ENCODE measurements at regions of chr12 and their contacts with region 1.

Region 1: GRCh38 chr12:13347241-13348043 is 150.9 kb downstream of the EMP1 start:
- DNase-seq: peak; percentile 76
- H3K4me3 Mint-ChIP-seq: no peak overlapping the region
- H3K27ac Mint-ChIP-seq: peak overlapping the region; percentile 18
- H3K4me1 Mint-ChIP-seq: peaks cover 11% of the 10 kb centered on the region
- H3K27me3 Mint-ChIP-seq: peaks cover 33% of the 10 kb centered on the region

Region 2: DNA sequence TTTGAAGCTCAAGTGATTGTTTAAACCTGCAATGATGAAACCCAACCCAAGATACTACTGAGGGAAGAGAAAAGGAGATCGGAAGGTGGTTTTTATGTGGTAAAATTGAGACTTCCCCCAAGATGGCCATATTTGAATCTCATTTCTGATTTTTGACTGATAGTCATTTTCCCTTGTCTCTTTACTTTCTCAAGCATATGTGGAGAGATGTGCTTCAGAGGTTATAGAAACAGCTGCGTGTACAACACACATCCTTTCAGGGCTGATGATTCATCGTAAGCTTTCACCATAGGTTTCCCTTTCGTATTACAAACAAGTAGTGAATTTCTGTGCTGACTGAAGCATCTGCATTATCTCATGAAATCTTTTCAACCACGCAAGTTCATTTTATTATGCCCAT is 125.2 kb after region 1 on chr12:
- CTCF ChIA-PET with region 1: no interaction called
- POLR2A ChIA-PET with region 1: no interaction called
- intact Hi-C with region 1: loop called (anchors 5 kb)
- DNase-seq: no peak
- H3K4me3 Mint-ChIP-seq: no peak overlapping the region
- H3K27ac Mint-ChIP-seq: no peak overlapping the region
- H3K4me1 Mint-ChIP-seq: peaks cover 5% of the 10 kb centered on the region
- H3K27me3 Mint-ChIP-seq: peaks cover 6% of the 10 kb centered on the region